ENCODE measurements at regions of chr9 and their contacts with region 1.

Region 1: GRCh38 chr9:21381448-21382339 is 3.5 kb downstream of the IFNA2 start:
- DNase-seq: no peak
- H3K4me3 Mint-ChIP-seq: no peak overlapping the region
- H3K27ac Mint-ChIP-seq: no peak overlapping the region
- H3K4me1 Mint-ChIP-seq: peaks cover 21% of the 10 kb centered on the region
- H3K27me3 Mint-ChIP-seq: peaks cover 54% of the 10 kb centered on the region

Region 2: DNA sequence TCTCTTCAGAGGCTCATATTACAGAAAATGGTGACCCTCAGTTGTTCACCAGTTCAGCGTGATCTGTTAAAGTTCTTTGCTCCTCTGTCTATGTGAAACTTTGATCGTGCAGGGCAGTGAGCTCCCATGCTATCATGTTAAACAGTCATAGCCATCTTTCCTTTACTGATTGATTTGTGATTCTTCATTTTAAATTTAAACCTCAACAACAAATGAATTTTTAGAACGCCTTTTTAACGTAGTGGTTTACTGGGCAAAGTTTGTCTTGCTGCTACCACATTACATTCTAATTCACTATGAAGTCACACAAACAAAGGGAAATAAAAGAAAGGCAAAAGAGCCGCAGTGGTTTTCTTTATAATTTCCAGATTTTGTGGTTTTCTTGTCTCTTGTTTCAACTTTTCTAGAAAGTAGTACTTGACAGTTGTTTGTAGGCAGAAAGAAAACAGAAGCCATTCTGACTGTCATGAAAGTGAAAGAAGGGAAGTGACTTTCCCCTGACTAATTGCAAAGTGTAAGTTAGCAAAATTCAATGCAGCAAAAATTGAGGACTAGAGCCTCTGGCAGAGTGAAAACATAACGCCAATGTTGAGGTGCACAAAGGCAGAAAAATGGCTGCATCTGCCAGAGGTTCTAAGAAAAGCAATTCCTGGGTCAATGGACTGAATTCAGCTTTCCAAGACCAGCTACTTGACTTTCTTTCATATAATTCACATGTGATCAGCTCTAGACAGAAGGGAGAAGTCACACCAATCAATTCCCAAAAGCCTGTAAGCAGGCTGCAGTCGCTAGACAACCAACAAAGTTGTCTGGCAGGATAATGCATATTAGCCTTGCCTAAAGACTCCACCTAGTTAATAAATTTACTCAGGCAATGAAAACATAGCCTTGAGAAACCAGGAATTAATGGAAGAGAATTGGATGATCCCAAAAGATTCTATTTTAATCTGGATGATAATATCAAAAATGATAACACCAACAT is 23.9 kb before region 1 on chr9:
- intact Hi-C with region 1: loop called (anchors 1 kb)
- DNase-seq: no peak
- H3K4me3 Mint-ChIP-seq: peak overlapping the region; percentile 56
- H3K27ac Mint-ChIP-seq: peak overlapping the region; percentile 81
- H3K4me1 Mint-ChIP-seq: peaks cover 23% of the 10 kb centered on the region
- H3K27me3 Mint-ChIP-seq: peaks cover 9% of the 10 kb centered on the region

Region 3: GRCh38 chr9:21434202-21435014 is 52.7 kb after region 1 on chr9:
- intact Hi-C with region 1: loop called (anchors 5 kb)
- DNase-seq: no peak
- H3K4me3 Mint-ChIP-seq: no peak overlapping the region
- H3K27ac Mint-ChIP-seq: no peak overlapping the region
- H3K4me1 Mint-ChIP-seq: peaks cover 2% of the 10 kb centered on the region
- H3K27me3 Mint-ChIP-seq: peaks cover 49% of the 10 kb centered on the region

Region 4: GRCh38 chr9:21549251-21549765 is 167.6 kb after region 1 on chr9:
- intact Hi-C with region 1: no loop called
- DNase-seq: no peak
- H3K4me3 Mint-ChIP-seq: no peak overlapping the region
- H3K27ac Mint-ChIP-seq: no peak overlapping the region
- H3K4me1 Mint-ChIP-seq: no peaks in the 10 kb centered on the region
- H3K27me3 Mint-ChIP-seq: no peaks in the 10 kb centered on the region

Region 5: DNA sequence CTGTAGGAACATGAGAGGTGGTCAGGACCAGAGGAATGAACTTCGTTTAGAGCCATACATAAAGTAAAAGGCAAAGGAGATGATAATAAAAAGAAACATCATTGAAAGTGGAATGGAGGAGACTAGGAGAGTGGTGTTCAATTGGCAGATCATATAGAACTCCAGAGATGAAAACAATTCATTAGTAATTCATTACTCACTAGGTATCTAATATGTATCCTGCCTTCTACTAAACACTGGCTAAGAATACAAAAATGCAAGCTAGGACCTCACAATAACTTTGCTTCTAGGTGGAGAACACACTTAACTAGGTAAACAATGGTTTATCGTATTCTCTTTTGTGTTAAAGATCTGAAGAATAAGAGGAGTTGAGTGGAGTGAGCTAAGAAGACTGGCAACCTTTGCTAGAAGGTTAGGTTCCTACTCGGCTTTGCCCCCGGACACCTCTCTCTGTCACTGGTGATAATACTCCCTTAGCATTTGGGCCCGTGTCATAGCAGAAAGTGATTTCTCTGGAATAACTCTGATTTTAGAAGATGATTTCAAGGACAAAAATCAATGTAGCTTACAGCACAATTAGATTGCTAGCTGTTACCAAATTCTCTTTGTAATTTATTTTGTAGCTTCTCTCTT is 189.1 kb after region 1 on chr9:
- intact Hi-C with region 1: no loop called
- DNase-seq: no peak
- H3K4me3 Mint-ChIP-seq: no peak overlapping the region
- H3K27ac Mint-ChIP-seq: no peak overlapping the region
- H3K4me1 Mint-ChIP-seq: no peaks in the 10 kb centered on the region
- H3K27me3 Mint-ChIP-seq: peaks cover 57% of the 10 kb centered on the region